Sciatic nerve (tissue), 2 donors: ENCODE measurements at regions of chrX and their contacts with region 1.

Region 1: DNA sequence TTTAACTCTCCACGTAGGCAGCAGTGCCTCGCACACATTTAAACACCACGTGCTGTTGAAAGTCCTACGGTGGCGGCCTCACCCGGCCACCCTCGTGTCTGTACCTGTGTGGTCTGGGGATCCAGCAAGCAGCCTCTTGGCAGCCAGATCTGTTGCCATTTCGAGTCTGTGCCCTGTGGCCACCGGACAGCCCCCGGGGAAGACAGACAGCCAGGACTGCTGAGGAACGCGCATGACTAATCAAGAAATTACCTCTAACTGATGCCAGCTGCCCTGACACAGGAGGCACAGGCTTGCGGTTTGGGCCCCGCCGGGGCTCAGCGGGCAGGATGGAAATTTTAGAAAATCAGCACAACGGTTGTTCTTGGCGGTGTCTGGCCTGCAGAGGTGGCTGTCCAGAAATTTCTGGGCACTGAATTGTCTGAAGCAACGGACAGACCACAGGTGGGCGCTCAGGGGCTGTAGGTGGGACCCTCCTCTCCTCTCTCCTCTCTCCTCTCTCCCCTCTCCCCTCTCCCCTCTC is 15.6 kb upstream of the ASMTL start:
- DNase-seq: peak; percentile 42
- ATAC-seq: no peak

Region 2: GRCh38 chrX:2608638-2609430 is 1140.5 kb after region 1 on chrX:
- intact Hi-C with region 1: loop called (anchors 10 kb)
- DNase-seq: peak; percentile 90
- ATAC-seq: peak; percentile 97